ENCODE measurements at regions of chr11 and their contacts with region 1.

Region 1: GRCh38 chr11:1619449-1619848 is 2.5 kb downstream of the KRTAP5-4 start:
- DNase-seq: no peak
- H3K4me3 ChIP-seq: no peak overlapping the region
- H3K27ac ChIP-seq: no peak overlapping the region
- H3K4me1 ChIP-seq: no peaks in the 10 kb centered on the region; a peak in 1 of 7 replicates
- H3K27me3 ChIP-seq: no peaks in the 10 kb centered on the region
- CTCF ChIP-seq: no peak
- EP300 ChIP-seq: no peak
- POLR2A ChIP-seq: no peak
- RAD21 ChIP-seq: no peak

Region 2: DNA sequence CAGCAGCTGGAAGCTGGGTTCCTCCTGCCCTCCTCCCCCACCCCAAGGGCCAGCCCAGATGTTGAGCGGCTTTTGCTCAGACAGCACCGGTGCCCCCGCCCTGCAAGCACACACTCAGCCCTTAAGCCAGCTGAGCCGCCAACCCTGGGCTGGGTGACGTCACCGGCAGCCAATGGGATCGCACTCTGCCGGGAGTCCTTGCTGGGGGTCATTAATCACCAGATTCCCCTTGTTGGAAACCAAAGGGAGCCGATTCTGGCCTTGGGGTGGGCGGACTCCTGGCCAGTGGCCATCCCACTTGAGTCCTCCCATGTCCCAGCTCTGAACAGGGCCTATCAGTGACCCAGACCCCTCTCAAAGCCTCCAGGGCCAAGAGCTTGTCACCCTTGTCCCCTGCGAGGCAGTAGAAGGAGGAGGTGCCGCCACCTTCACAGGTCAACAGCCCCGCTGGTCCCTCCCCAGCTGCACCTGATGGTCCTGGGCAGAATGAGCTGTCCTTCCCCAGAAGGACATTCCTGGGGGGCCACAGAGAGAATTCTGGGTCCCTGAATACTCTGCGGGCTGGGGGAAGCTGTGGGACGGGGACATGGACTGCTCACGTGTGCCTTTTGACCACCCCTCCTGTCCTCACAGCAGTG is 54.8 kb before region 1 on chr11:
- CTCF ChIA-PET with region 1: no interaction called
- POLR2A ChIA-PET with region 1: no interaction called
- DNase-seq: peak in 1 of 2 experiments; percentile 90
- H3K4me3 ChIP-seq: peak overlapping the region in 1 of 4 experiments; percentile 8; a peak in 2 of 8 replicates
- H3K27ac ChIP-seq: no peak overlapping the region
- H3K4me1 ChIP-seq: peaks cover 0 to 46% (median 31%) of the 10 kb centered on the region in 4 experiments; a peak in 6 of 7 replicates
- H3K27me3 ChIP-seq: peaks cover 0 to 11% (median 6%) of the 10 kb centered on the region in 4 experiments; a peak in 4 of 7 replicates
- CTCF ChIP-seq: no peak
- EP300 ChIP-seq: no peak
- POLR2A ChIP-seq: no peak
- RAD21 ChIP-seq: no peak

Region 3: GRCh38 chr11:1640076-1640946 is 20.9 kb after region 1 on chr11:
- CTCF ChIA-PET with region 1: interaction called, 47 read pairs
- POLR2A ChIA-PET with region 1: no interaction called
- DNase-seq: peak; percentile 58 to 87
- H3K4me3 ChIP-seq: no peak overlapping the region
- H3K27ac ChIP-seq: no peak overlapping the region
- H3K4me1 ChIP-seq: no peaks in the 10 kb centered on the region; a peak in 1 of 7 replicates
- H3K27me3 ChIP-seq: no peaks in the 10 kb centered on the region; a peak in 1 of 7 replicates
- CTCF ChIP-seq: peak; percentile 86 to 92 (median 89)
- EP300 ChIP-seq: no peak
- POLR2A ChIP-seq: no peak
- RAD21 ChIP-seq: peak; percentile 42 to 60; a peak in 3 of 4 replicates

Measured in H1 (cell line).